ENCODE measurements at regions of chr2 and their contacts with region 1.

Region 1: GRCh38 chr2:88131201-88131998 is 3.5 kb upstream of the FABP1 start:
- DNase-seq: no peak
- ATAC-seq: no peak
- H3K4me3 ChIP-seq: no peak overlapping the region
- H3K27ac ChIP-seq: no peak overlapping the region
- H3K4me1 ChIP-seq: no peaks in the 10 kb centered on the region
- H3K27me3 ChIP-seq: no peaks in the 10 kb centered on the region

Region 2: DNA sequence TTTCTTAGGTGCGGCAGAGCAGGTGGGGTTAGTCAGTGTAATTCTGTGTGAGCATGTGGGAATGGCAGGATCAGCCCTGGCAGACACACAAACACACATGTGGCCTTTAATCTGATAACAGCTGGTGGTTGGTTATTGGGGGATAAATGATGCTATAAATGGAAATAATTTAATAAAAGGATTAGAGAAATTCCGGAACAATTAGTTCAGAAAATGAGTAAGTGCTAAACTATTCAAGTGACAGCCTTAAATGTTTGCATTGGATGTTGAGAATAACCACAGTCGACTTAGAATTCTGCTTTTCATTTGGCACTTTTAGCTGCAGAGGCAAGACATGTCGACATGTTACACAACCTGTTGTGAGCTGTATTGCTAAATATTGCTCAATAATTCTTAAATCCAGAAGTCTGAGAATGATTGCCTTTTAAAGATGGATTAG is 56.5 kb before region 1 on chr2:
- intact Hi-C with region 1: no loop called
- DNase-seq: no peak
- ATAC-seq: no peak
- H3K4me3 ChIP-seq: no peak overlapping the region
- H3K27ac ChIP-seq: peak overlapping the region; percentile 9
- H3K4me1 ChIP-seq: no peaks in the 10 kb centered on the region
- H3K27me3 ChIP-seq: no peaks in the 10 kb centered on the region

Region 3: GRCh38 chr2:88108796-88109195 is 22.6 kb before region 1 on chr2:
- intact Hi-C with region 1: loop called in 1 of 4 experiments (anchors 2 kb)
- DNase-seq: no peak
- ATAC-seq: peak; percentile 20 to 55
- H3K4me3 ChIP-seq: no peak overlapping the region
- H3K27ac ChIP-seq: no peak overlapping the region
- H3K4me1 ChIP-seq: no peaks in the 10 kb centered on the region
- H3K27me3 ChIP-seq: no peaks in the 10 kb centered on the region

Region 4: DNA sequence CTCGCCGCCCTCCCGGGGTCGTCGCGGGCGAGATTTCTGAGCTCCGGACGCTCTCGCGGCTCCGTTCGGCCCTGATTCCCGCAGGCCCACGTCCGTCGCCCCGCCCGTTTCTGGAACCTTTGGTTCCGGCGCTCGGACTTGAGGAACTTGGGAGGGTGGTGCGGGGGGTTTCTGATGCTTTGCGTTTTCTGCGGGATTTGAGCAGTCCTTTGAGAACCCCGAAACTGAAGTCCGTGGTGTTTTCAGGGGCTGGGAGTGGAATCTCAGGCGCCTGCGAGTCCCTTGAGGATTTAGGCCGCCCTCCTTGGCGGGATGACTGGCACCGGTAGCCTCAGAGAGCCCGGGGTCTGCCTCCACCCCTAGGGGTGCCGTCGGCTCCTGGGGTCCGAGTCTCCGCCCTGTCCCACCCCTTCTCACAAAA is 39.1 kb after region 1 on chr2:
- intact Hi-C with region 1: no loop called
- DNase-seq: peak in 2 of 3 donors; percentile 26 to 65
- ATAC-seq: peak; percentile 39 to 45
- H3K4me3 ChIP-seq: peak overlapping the region; percentile 98
- H3K27ac ChIP-seq: peak overlapping the region; percentile 40
- H3K4me1 ChIP-seq: peaks cover 4% of the 10 kb centered on the region
- H3K27me3 ChIP-seq: no peaks in the 10 kb centered on the region

Region 5: DNA sequence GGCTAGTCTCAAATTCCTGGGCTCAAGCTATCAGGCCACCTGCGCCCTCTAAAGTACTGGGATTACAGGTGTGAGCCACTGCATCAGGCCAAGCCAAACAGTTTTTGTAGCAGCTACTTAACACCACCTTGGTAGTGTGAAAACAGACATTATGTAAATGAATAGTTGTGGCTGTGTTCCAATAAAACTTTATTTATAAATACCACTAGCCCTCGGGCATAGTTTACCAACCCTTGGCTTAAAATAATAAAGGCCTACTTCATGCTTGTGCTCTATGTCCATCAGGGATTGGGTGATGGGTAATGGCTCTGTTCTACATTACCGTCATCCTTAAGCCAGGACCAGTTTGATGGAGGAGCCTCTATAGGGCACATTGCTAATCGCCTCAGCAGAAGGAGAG is 157.0 kb after region 1 on chr2:
- intact Hi-C with region 1: no loop called
- DNase-seq: no peak
- ATAC-seq: no peak
- H3K4me3 ChIP-seq: no peak overlapping the region
- H3K27ac ChIP-seq: no peak overlapping the region
- H3K4me1 ChIP-seq: no peaks in the 10 kb centered on the region
- H3K27me3 ChIP-seq: no peaks in the 10 kb centered on the region